BJ (cell line): ENCODE measurements at regions of chr10 and their contacts with region 1.

Region 1: GRCh38 chr10:33193057-33193700 is 141.3 kb downstream of the NRP1 start:
- DNase-seq: peak; percentile 47
- H3K4me3 ChIP-seq: no peak overlapping the region
- H3K27me3 ChIP-seq: no peaks in the 10 kb centered on the region
- CTCF ChIP-seq: peak; percentile 81

Region 2: DNA sequence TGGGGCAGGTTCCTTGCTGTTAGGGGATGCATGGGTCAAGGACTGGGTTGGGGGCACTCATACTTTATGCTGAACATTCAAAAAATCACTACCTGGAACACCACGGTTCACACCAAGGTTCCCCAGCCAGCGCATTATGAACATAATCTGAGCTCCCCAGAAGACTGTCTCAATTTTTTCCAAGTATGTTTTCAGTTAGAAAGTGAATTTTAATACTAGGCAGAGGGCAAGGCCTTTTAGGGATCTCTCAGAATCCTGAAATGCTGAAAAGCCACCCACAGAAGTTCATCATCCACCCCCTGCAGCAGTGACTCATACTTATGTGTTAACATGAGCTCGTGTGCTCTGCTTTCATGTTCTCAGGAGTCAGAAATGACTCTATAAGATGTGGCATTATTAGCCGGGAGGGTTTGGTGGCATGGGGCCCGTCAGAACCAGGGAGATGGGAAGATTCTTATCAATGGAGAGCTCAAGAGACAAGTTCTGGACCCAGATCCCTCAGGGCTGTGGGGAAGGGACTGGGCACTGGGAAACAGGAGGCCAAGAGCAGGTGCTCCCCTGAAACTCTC is 49.9 kb before region 1 on chr10:
- CTCF ChIA-PET with region 1: no interaction called
- POLR2A ChIA-PET with region 1: no interaction called
- DNase-seq: no peak
- H3K4me3 ChIP-seq: no peak overlapping the region
- H3K27me3 ChIP-seq: no peaks in the 10 kb centered on the region
- CTCF ChIP-seq: no peak

Region 3: GRCh38 chr10:33211106-33211878 is 18.1 kb after region 1 on chr10:
- CTCF ChIA-PET with region 1: interaction called, 14 read pairs
- POLR2A ChIA-PET with region 1: no interaction called
- DNase-seq: peak; percentile 89
- H3K4me3 ChIP-seq: no peak overlapping the region
- H3K27me3 ChIP-seq: no peaks in the 10 kb centered on the region
- CTCF ChIP-seq: no peak

Region 4: GRCh38 chr10:33330543-33331378 is 137.6 kb after region 1 on chr10:
- CTCF ChIA-PET with region 1: interaction called, 18 read pairs
- POLR2A ChIA-PET with region 1: interaction called, 3 read pairs
- DNase-seq: no peak
- H3K4me3 ChIP-seq: peak overlapping the region; percentile 95
- H3K27me3 ChIP-seq: no peaks in the 10 kb centered on the region
- CTCF ChIP-seq: peak; percentile 89